Activated CD8-positive, alpha-beta memory T cell treated with anti-CD3 and anti-CD28 coated beads, Interleukin-2, amount 10 ng/mL, durations not matched to agents 7 days and 5 days (primary cell): ENCODE measurements at regions of chr2 and their contacts with region 1.

Region 1: GRCh38 chr2:168971261-168971660 is 59.9 kb downstream of the ABCB11 start:
- DNase-seq: no peak
- ATAC-seq: no peak
- H3K4me3 Mint-ChIP-seq: no peak overlapping the region
- H3K27ac Mint-ChIP-seq: no peak overlapping the region
- H3K4me1 Mint-ChIP-seq: no peaks in the 10 kb centered on the region
- H3K27me3 Mint-ChIP-seq: no peaks in the 10 kb centered on the region

Region 2: GRCh38 chr2:168948621-168949212 is 22.5 kb before region 1 on chr2:
- CTCF ChIA-PET with region 1: interaction called, 10 read pairs
- DNase-seq: no peak
- ATAC-seq: no peak
- H3K4me3 Mint-ChIP-seq: no peak overlapping the region
- H3K27ac Mint-ChIP-seq: no peak overlapping the region
- H3K4me1 Mint-ChIP-seq: peaks cover 6% of the 10 kb centered on the region
- H3K27me3 Mint-ChIP-seq: peaks cover 28% of the 10 kb centered on the region